Right ventricle myocardium superior (tissue), 1 donor: ENCODE measurements at regions of chr3 and their contacts with region 1.

Region 1: GRCh38 chr3:99023590-99024192 is 122.2 kb upstream of the DCBLD2 start:
- DNase-seq: no peak
- ATAC-seq: no peak

Region 2: DNA sequence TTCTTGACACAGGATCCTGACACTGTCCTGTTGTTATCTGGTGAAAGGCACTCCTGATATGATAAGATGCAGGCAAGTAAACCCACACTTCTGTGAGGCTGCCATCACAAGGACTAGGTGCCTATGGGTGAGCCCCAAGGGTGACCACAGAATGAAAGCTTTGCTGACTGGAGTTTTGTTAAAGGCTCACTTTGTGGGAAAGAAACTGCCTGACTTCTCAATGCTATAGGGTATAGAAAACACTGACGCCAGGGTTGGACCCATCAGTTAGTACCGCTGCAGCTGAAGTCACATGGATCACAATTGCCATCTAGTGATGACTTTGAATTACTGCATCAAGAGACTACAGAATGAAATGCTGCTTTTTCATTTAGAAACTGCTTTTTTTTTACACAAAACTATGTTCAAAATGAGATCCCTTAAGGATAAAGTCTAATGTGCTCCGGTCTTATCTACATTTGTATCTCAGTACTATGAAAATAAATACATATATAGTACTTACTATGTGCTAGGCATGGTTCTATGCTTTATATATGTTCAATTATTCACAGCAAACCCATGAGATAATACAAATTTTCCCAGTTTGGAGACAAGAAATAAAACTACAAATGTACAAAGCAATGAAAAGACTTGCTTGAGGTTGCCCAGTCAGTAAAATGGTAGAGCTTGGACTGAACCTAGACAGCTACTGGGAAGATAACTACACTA is 729.7 kb after region 1 on chr3:
- intact Hi-C with region 1: loop called (anchors 10 kb)
- DNase-seq: no peak
- ATAC-seq: peak; percentile 83